ENCODE measurements at regions of chr12 and their contacts with region 1.

Region 1: DNA sequence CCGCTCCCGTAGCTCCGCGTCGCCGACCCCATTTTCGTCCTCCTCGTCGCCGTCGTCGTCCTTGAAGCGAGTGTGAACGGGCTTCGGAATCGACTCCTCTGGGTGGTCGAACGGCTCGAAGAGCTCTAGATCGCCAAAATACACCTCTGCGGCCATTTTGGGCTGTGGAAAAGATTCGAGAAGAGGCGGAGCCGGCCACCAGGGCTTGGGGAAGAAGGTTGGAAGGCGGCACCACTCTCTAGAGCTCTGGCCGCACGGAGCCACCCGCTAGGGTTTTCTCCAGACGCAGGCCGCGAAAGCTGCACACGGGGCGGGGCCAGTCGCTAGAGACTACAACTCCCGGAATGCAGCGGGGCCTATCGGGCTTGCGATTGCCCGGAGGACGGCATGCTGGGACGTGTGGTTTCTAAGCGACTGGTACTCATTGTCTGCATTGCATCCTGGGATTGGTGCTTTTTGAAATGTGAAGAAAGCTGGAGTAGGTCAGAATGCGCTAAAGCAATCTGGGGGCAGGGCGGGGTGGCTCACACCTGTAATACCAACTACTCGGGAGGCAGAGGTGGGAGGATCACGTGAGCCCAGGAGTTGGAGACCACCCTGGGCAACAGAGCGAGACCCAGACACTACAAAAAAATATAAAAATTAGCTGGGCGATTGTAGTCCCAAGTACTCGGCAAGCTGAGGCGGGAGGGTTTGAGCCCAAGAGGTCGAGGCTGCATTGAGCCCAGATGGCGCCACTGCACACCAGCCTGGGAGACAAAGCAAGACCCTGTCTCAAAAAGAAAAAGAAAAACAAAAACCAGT is at the start of gene ZCCHC8:
- DNase-seq: peak; percentile 98
- H3K4me3 Mint-ChIP-seq: peak within 1 kb of the TSS; percentile 98
- H3K27ac Mint-ChIP-seq: peak within 1 kb of the TSS; percentile 99
- H3K4me1 Mint-ChIP-seq: peaks cover 33% of the 10 kb centered on the region
- H3K27me3 Mint-ChIP-seq: no peaks in the 10 kb centered on the region
- total RNA-seq, gene ZCCHC8: 27.7 to 28.5 TPM

Region 2: GRCh38 chr12:122225683-122226407 is 275.0 kb before region 1 on chr12 and contains the start of gene DIABLO:
- CTCF ChIA-PET with region 1: no interaction called
- POLR2A ChIA-PET with region 1: interaction called, 7 read pairs
- intact Hi-C with region 1: loop called (anchors 1 kb)
- DNase-seq: peak; percentile 100
- H3K4me3 Mint-ChIP-seq: peak within 1 kb of the TSS; percentile 85
- H3K27ac Mint-ChIP-seq: peak within 1 kb of the TSS; percentile 82
- H3K4me1 Mint-ChIP-seq: peaks cover 43% of the 10 kb centered on the region
- H3K27me3 Mint-ChIP-seq: no peaks in the 10 kb centered on the region
- total RNA-seq, gene DIABLO: 51.8 to 52.0 TPM

Region 3: GRCh38 chr12:122413516-122414404 is 87.1 kb before region 1 on chr12:
- CTCF ChIA-PET with region 1: interaction called, 4 read pairs
- POLR2A ChIA-PET with region 1: interaction called, 5 read pairs
- intact Hi-C with region 1: loop called (anchors 2 kb)
- DNase-seq: no peak
- H3K4me3 Mint-ChIP-seq: peak overlapping the region; percentile 71
- H3K27ac Mint-ChIP-seq: peak overlapping the region; percentile 96
- H3K4me1 Mint-ChIP-seq: peaks cover 56% of the 10 kb centered on the region
- H3K27me3 Mint-ChIP-seq: no peaks in the 10 kb centered on the region

Region 4: GRCh38 chr12:122471324-122472226 is 29.3 kb before region 1 on chr12:
- CTCF ChIA-PET with region 1: interaction called, 14 read pairs
- POLR2A ChIA-PET with region 1: interaction called, 6 read pairs
- intact Hi-C with region 1: no loop called
- DNase-seq: peak; percentile 9
- H3K4me3 Mint-ChIP-seq: no peak overlapping the region
- H3K27ac Mint-ChIP-seq: no peak overlapping the region
- H3K4me1 Mint-ChIP-seq: peaks cover 24% of the 10 kb centered on the region
- H3K27me3 Mint-ChIP-seq: no peaks in the 10 kb centered on the region

Region 5: DNA sequence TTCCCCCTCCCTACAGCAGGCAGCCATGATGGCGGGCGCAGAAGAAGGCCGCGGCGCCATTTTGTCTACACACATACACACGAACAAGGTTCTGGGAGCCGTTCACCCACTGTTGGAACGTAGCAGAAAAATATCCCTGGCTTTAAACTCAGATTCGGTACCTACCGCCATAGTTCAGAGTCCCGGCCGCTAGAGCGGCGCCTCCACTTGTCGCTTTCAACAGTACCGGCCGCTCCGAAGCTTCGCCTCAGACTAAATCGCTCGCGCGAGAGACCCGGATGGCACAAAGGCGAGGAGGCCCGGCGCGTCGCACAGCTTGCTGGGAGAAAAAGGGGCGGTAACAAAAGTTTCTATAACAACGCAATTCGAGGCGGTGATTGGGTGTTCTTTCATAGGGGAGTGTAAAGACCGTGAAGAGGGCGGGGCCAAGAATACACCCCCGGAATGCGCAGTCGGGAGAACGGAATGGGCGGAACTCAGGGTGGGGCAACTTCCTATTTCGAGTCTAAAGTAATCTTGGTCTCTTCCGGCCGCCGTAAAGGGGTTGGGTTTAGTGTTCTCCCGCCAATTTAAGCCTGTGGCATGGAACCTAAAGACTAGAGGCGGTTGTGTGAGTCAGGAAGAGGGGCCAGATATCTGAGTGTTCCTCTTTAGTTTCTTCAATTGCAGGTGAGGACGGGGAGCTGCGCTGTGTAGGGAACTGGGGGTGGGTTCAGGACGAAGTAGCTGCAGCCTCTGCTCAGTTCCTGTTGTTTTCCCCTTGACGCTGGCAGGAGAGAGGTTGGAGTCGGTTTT is 26.0 kb after region 1 on chr12 and contains the starts of genes KNTC1 and RSRC2:
- CTCF ChIA-PET with region 1: interaction called, 8 read pairs
- POLR2A ChIA-PET with region 1: interaction called, 215 read pairs
- intact Hi-C with region 1: loop called (anchors 1 kb)
- DNase-seq: peak; percentile 99
- H3K4me3 Mint-ChIP-seq: no peak within 1 kb of the TSS
- H3K27ac Mint-ChIP-seq: no peak within 1 kb of the TSS
- H3K4me1 Mint-ChIP-seq: peaks cover 36% of the 10 kb centered on the region
- H3K27me3 Mint-ChIP-seq: no peaks in the 10 kb centered on the region
- total RNA-seq, gene KNTC1: 136 to 147 TPM
- total RNA-seq, gene RSRC2: 106 to 115 TPM

Region 6: GRCh38 chr12:122752464-122753318 is 251.8 kb after region 1 on chr12 and contains the start of gene DENR:
- CTCF ChIA-PET with region 1: no interaction called
- POLR2A ChIA-PET with region 1: interaction called, 7 read pairs
- intact Hi-C with region 1: loop called (anchors 1 kb)
- DNase-seq: peak; percentile 100
- H3K4me3 Mint-ChIP-seq: peak within 1 kb of the TSS; percentile 94
- H3K27ac Mint-ChIP-seq: peak within 1 kb of the TSS; percentile 86
- H3K4me1 Mint-ChIP-seq: peaks cover 44% of the 10 kb centered on the region
- H3K27me3 Mint-ChIP-seq: no peaks in the 10 kb centered on the region
- total RNA-seq, gene DENR: 56.9 to 58.2 TPM

Measured in activated CD4-positive, alpha-beta memory T cell treated with anti-CD3 and anti-CD28 coated beads for 36 hours (primary cell).